ENCODE measurements at regions of chr12 and their contacts with region 1.

Region 1: DNA sequence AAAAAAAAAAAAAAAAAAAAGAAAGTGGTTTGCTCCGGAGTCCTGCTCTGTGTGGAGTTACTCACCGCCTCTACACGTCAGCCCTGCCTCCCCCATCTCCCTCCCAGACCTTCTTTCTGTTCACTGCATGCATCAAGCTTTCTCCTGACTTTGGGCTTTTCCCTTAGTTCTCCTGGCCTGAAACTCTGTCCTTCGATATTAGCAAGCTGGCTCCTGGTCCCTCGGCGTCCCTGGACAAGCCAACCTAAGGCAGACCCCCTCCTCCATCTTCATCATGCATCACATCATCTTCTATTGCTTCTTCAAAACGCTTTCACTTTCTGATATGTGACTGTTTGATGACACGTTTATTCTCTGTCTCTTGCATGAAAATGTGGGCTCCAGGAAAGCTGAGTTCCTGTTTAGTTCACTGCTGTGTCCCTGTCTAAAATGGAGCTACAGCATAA is 40.6 kb downstream of the SLC15A4 start:
- DNase-seq: peak; percentile 50
- H3K4me3 Mint-ChIP-seq: peak overlapping the region; percentile 66
- H3K27ac Mint-ChIP-seq: peak overlapping the region; percentile 83
- H3K4me1 Mint-ChIP-seq: peaks cover 12% of the 10 kb centered on the region
- H3K27me3 Mint-ChIP-seq: no peaks in the 10 kb centered on the region

Region 2: GRCh38 chr12:128810182-128811127 is 27.3 kb after region 1 on chr12:
- CTCF ChIA-PET with region 1: interaction called, 3 read pairs
- POLR2A ChIA-PET with region 1: interaction called, 4 read pairs
- intact Hi-C with region 1: loop called (anchors 2 kb)
- DNase-seq: peak; percentile 46
- H3K4me3 Mint-ChIP-seq: no peak overlapping the region
- H3K27ac Mint-ChIP-seq: no peak overlapping the region
- H3K4me1 Mint-ChIP-seq: peaks cover 30% of the 10 kb centered on the region
- H3K27me3 Mint-ChIP-seq: no peaks in the 10 kb centered on the region

Region 3: GRCh38 chr12:128823916-128824839 is 41.0 kb after region 1 on chr12 and contains the start of gene SLC15A4:
- CTCF ChIA-PET with region 1: no interaction called
- POLR2A ChIA-PET with region 1: interaction called, 4 read pairs
- intact Hi-C with region 1: loop called (anchors 1 kb)
- DNase-seq: peak; percentile 95
- H3K4me3 Mint-ChIP-seq: peak within 1 kb of the TSS; percentile 78
- H3K27ac Mint-ChIP-seq: no peak within 1 kb of the TSS
- H3K4me1 Mint-ChIP-seq: peaks cover 27% of the 10 kb centered on the region
- H3K27me3 Mint-ChIP-seq: peaks cover 5% of the 10 kb centered on the region
- total RNA-seq, gene SLC15A4: 15.5 to 19.3 TPM

Region 4: GRCh38 chr12:128914908-128915563 is 131.9 kb after region 1 on chr12:
- CTCF ChIA-PET with region 1: no interaction called
- POLR2A ChIA-PET with region 1: no interaction called
- intact Hi-C with region 1: loop called (anchors 10 kb)
- DNase-seq: peak; percentile 31
- H3K4me3 Mint-ChIP-seq: no peak overlapping the region
- H3K27ac Mint-ChIP-seq: no peak overlapping the region
- H3K4me1 Mint-ChIP-seq: peaks cover 3% of the 10 kb centered on the region
- H3K27me3 Mint-ChIP-seq: peaks cover 8% of the 10 kb centered on the region

Region 5: GRCh38 chr12:129911428-129912049 is 1128.4 kb after region 1 on chr12:
- CTCF ChIA-PET with region 1: interaction called, 3 read pairs
- POLR2A ChIA-PET with region 1: no interaction called
- intact Hi-C with region 1: loop called (anchors 5 kb)
- DNase-seq: peak; percentile 32
- H3K4me3 Mint-ChIP-seq: no peak overlapping the region
- H3K27ac Mint-ChIP-seq: no peak overlapping the region
- H3K4me1 Mint-ChIP-seq: no peaks in the 10 kb centered on the region
- H3K27me3 Mint-ChIP-seq: peaks cover 2% of the 10 kb centered on the region